Activated T-helper 1 cell treated with anti-CD3 and anti-CD28 coated beads, Interleukin-12 subunit alpha, Interleukin-12 subunit beta, Interleukin-2, Interleukin-4 antibody, amounts not matched to agents 30 ng/mL and 10 ng/mL and 1 ng/mL, durations not matched to agents 14 hours and 24 hours and 36 hours (primary cell): ENCODE measurements at regions of chr11 and their contacts with region 1.

Region 1: DNA sequence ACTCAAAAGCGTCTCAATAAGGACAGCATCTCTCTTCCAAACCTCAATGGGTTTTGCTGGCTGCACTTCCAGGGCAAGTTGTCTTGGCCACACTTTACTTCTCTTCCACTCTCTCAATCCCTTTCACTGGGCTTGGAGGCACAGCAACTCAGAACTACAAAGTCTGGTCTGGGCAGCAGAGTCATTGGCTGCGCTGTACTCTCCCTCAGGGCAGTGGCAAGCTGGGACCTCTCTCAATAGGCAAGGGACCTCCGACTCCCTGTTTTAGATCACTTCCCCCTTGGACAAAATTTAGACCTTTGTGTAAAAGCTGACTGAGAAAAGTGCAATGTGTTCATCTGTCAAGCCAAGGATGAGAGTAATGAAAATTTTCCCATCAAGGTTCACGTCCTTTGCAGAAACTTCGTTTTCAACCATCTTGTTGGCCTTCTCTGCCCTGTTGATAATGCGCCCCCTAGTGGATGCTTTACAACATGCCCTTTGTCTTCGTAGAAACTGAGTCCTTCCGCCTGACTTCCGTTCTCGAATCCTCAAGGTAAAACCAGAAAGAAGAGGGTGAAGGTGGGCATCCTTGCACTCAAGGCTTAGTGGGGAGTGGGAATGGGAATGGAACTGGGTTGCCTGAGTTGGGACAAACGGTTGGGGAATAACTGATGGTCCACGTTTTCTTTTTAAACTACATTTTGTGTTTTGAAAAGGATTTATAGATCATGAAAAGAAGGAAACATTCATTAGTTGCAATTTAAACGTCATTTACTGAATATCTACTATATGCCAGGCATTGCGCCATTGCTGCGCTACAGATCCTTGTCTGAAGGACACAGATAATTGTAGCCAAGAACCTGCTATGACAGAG is 99.1 kb downstream of the CD44 start:
- DNase-seq: peak; percentile 48
- H3K4me3 Mint-ChIP-seq: peak overlapping the region; percentile 42
- H3K27ac Mint-ChIP-seq: peak overlapping the region; percentile 36
- H3K4me1 Mint-ChIP-seq: peaks cover 67% of the 10 kb centered on the region
- H3K27me3 Mint-ChIP-seq: no peaks in the 10 kb centered on the region

Region 2: DNA sequence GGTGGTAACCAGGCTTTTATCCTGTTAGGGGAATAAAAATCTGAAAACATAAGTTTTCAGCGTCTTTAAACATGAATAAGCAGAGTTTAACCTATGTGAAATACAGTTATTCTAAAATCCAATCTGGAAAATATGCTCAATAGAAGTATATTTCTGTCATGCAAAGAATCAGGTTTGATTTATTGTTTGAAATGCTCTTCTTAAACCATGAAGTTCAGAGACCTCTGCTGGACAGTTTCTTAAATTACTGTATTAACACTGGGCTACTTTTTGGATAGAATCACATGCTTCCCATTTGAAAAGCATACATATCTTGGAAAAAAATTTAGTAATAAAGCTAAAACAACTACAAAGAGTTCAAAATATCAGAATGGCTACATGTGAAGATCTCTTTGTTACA is 347.3 kb before region 1 on chr11:
- intact Hi-C with region 1: no loop called
- DNase-seq: no peak
- H3K4me3 Mint-ChIP-seq: no peak overlapping the region
- H3K27ac Mint-ChIP-seq: no peak overlapping the region
- H3K4me1 Mint-ChIP-seq: no peaks in the 10 kb centered on the region
- H3K27me3 Mint-ChIP-seq: no peaks in the 10 kb centered on the region

Region 3: GRCh38 chr11:34926101-34926830 is 311.8 kb before region 1 on chr11:
- intact Hi-C with region 1: loop called (anchors 1 kb)
- DNase-seq: no peak
- H3K4me3 Mint-ChIP-seq: no peak overlapping the region
- H3K27ac Mint-ChIP-seq: no peak overlapping the region
- H3K4me1 Mint-ChIP-seq: peaks cover 7% of the 10 kb centered on the region
- H3K27me3 Mint-ChIP-seq: no peaks in the 10 kb centered on the region

Region 4: DNA sequence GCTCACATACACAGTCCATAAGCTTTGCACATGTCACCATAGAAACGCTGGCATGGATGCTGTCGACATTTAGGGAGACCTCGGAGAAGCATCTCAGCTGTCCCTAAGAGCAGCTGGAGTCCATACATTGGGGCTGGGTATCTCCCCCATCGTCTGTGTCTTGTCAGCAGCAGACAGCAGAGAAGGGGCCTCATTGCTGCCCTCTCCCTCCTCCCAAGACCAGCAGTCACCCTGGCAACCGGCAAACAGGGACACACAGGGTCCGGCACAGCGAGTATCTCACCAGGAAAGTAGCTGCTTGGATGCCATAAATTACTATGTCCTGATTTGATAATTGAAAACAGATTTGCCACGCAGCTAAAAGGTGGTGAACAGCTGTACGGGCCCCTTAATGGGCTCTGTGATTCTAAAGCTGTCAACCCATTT is 14.7 kb before region 1 on chr11:
- intact Hi-C with region 1: loop called (anchors 1 kb)
- DNase-seq: no peak
- H3K4me3 Mint-ChIP-seq: no peak overlapping the region
- H3K27ac Mint-ChIP-seq: no peak overlapping the region
- H3K4me1 Mint-ChIP-seq: peaks cover 12% of the 10 kb centered on the region
- H3K27me3 Mint-ChIP-seq: no peaks in the 10 kb centered on the region